IMR-90 (cell line): ENCODE measurements at regions of chr4 and their contacts with region 1.

Region 1: GRCh38 chr4:73234712-73235111 is 23.9 kb downstream of the ANKRD17 start:
- DNase-seq: peak; percentile 6
- ATAC-seq: no peak
- H3K4me3 ChIP-seq: no peak overlapping the region
- H3K27ac ChIP-seq: no peak overlapping the region
- H3K4me1 ChIP-seq: no peaks in the 10 kb centered on the region
- H3K27me3 ChIP-seq: no peaks in the 10 kb centered on the region
- CTCF ChIP-seq: no peak
- POLR2A ChIP-seq: no peak
- RAD21 ChIP-seq: no peak

Region 2: GRCh38 chr4:73080789-73081188 is 153.9 kb before region 1 on chr4:
- CTCF ChIA-PET with region 1: no interaction called
- POLR2A ChIA-PET with region 1: no interaction called
- dilution Hi-C with region 1: no loop called
- in situ Hi-C with region 1: no loop called
- intact Hi-C with region 1: loop called (anchors 5 kb)
- DNase-seq: no peak
- ATAC-seq: no peak
- H3K4me3 ChIP-seq: no peak overlapping the region
- H3K27ac ChIP-seq: no peak overlapping the region
- H3K4me1 ChIP-seq: no peaks in the 10 kb centered on the region
- H3K27me3 ChIP-seq: no peaks in the 10 kb centered on the region
- CTCF ChIP-seq: no peak
- POLR2A ChIP-seq: no peak
- RAD21 ChIP-seq: no peak

Region 3: GRCh38 chr4:73251384-73251783 is 16.7 kb after region 1 on chr4:
- CTCF ChIA-PET with region 1: no interaction called
- POLR2A ChIA-PET with region 1: no interaction called
- dilution Hi-C with region 1: no loop called
- in situ Hi-C with region 1: no loop called
- intact Hi-C with region 1: no loop called
- DNase-seq: no peak
- ATAC-seq: no peak
- H3K4me3 ChIP-seq: no peak overlapping the region
- H3K27ac ChIP-seq: no peak overlapping the region
- H3K4me1 ChIP-seq: no peaks in the 10 kb centered on the region
- H3K27me3 ChIP-seq: no peaks in the 10 kb centered on the region
- CTCF ChIP-seq: no peak
- POLR2A ChIP-seq: no peak
- RAD21 ChIP-seq: no peak